Prostate gland (tissue), 2 donors: ENCODE measurements at regions of chr19 and their contacts with region 1.

Region 1: DNA sequence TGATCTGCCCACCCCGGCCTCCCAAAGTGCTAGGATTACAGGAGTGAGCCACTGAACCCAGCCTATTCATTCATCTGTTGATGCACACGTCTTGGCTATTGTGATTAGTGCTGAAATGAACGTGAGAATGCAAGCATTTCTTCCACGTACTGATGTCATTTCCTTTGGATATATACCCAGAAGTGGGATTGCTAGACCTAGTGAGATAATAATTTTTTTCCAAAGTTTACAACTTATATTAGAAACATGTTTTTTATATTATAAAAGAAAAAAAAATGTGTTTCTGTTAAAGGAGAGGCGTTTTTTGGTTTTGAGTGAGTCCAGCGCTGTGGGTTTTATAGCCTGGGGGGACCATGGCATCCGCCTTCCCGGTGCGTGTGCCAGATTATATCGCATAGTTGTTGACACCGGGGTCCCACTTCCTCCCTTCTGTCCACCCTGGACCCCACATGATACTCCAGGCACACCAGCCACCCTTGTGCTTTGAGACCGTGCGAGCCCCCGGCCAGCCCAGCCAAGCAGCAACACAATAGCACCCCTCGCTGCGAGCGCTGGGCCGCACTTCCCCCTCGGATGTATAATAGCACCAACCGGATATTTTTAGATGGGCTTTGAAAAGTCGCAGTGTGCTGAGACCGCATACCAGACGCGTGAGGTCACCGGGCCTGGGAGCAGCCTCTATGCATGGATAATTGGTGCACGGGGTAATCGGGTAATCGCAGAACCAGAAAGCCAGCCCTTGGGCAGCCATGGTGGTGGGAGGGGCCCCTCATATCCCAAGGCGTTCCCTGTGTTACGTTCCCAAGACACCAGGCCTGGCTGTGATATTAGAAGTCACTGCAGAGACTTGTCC is 59.6 kb downstream of the MYO9B start:
- DNase-seq: peak; percentile 87
- H3K4me3 ChIP-seq: no peak overlapping the region
- H3K27ac ChIP-seq: peak overlapping the region; percentile 82 to 89
- H3K4me1 ChIP-seq: peaks cover 14% of the 10 kb centered on the region
- H3K27me3 ChIP-seq: no peaks in the 10 kb centered on the region
- CTCF ChIP-seq: peak in 3 of 4 experiments; percentile 10 to 54 (median 36)
- POLR2A ChIP-seq: peak; percentile 34

Region 2: DNA sequence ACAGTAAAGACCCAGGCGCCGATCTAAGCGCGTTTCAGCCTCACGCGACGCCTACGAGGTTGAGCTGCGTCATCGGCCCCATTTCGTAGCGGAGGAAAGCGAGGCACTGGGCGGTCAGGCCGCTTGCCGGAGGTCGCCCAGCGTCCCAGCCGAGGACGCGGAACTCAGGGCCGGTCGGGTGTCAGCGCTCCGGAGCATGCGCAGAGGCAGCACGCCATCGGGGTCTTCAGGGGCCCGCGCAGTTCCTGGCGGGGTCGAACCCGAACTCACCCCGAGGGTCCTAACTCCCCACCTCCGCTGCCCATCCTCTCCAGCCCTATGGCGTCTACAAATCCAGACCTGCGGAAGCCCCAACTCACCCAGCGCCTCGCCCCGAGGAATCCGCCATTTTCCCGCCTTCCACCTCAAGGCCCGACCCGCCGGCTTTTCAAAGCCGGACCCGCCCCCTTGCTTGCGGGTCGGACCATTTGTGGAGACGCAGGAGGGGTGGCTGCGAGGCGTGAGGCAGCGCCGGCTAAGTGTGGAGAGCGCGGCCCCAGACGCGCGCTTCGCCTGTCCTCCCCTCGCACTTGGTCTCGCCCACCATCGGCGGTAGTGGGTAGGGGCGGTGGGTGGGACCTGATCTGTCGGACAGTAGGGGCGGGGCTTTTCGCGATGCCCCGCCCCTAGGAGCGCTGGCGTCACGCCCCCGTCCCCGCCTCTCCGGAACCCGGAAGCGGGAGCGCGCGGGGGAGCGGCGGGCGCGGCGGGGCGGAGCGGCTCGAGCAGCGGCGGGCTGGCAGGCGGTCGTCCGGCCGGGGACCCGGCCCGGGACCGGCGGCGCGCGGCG is 60.0 kb before region 1 on chr19 and contains the starts of genes HAUS8 and MYO9B:
- intact Hi-C with region 1: loop called (anchors 5 kb)
- DNase-seq: peak; percentile 99
- H3K4me3 ChIP-seq: peak within 1 kb of the TSS; percentile 67 to 87
- H3K27ac ChIP-seq: peak within 1 kb of the TSS; percentile 81 to 83
- H3K4me1 ChIP-seq: peaks cover 13% of the 10 kb centered on the region
- H3K27me3 ChIP-seq: no peaks in the 10 kb centered on the region
- CTCF ChIP-seq: peak in 2 of 4 experiments; percentile 33 to 48
- POLR2A ChIP-seq: peak; percentile 67
- total RNA-seq, gene HAUS8: 6.5 to 15.3 TPM
- total RNA-seq, gene MYO9B: 50.9 to 208 TPM

Region 3: DNA sequence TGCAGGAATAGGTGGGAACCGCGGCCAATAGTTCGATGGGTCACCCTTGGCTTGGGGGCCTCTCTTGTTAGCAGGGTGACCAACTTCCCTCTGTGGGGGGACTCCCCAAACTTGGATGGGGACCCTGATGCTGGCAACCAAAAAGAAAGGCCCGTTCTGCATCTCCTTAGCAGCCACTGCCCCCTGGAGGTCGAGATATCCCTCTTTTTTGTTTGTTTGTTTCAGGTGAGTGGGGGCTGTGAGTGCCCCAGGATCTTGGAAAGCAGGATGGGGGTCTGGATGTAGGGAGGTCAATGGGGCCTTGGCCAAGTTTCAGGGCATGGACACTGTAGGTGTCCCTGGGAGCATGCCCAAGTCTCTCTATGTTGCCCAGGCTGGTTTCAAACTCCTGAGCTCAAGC is 1540.6 kb after region 1 on chr19:
- intact Hi-C with region 1: no loop called
- DNase-seq: no peak
- H3K4me3 ChIP-seq: no peak overlapping the region
- H3K27ac ChIP-seq: no peak overlapping the region
- H3K4me1 ChIP-seq: no peaks in the 10 kb centered on the region
- H3K27me3 ChIP-seq: no peaks in the 10 kb centered on the region
- CTCF ChIP-seq: peak in 1 of 4 experiments; percentile 8
- POLR2A ChIP-seq: no peak